HEK293 (cell line): ENCODE measurements at regions of chr12 and their contacts with region 1.

Region 1: GRCh38 chr12:121110211-121110940 is 22.3 kb upstream of the P2RX7 start:
- H3K4me3 ChIP-seq: no peak overlapping the region
- H3K27ac ChIP-seq: no peak overlapping the region
- H3K4me1 ChIP-seq: no peaks in the 10 kb centered on the region
- CTCF ChIP-seq: peak; percentile 81

Region 2: DNA sequence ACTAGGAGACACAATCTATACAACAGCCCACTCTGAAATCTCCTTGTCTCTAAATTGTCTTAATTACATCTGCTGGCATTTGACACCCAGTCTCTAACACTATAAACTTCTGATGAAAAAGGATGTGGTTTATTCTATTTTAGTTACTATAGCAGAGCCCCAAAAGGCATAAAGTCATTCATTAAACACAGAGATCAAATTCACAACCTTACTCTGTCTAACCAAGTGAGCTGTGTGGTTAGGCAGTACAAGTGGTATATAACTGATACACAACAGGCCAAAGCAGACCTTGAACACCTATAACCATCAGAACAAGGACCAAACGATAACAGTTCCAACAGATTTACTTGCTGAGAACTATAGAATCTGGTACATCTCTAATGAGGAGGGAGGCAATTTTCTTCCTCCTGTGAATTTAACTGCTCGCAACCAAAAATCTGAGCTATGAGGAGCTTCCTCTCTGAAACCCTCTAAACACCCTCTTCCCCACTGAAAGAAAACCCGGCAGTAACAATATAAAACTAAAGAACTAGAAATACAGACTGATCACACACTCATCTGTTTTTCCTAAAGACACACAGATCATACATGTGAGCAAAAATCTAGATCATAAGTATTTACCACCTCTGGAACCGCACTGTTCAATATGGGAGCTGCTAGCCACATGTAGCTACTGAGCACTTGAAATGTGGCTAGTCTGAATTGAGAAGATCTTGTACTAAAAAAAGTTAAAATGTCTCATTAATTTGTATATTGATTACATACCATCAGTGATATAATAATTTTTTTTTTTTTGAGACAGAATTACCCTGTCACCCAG is 224.0 kb before region 1 on chr12:
- CTCF ChIA-PET with region 1: no interaction called
- POLR2A ChIA-PET with region 1: no interaction called
- H3K4me3 ChIP-seq: no peak overlapping the region
- H3K27ac ChIP-seq: no peak overlapping the region
- H3K4me1 ChIP-seq: peaks cover 11% of the 10 kb centered on the region
- CTCF ChIP-seq: no peak

Region 3: GRCh38 chr12:121095544-121096198 is 14.7 kb before region 1 on chr12:
- CTCF ChIA-PET with region 1: interaction called, 24 read pairs
- POLR2A ChIA-PET with region 1: no interaction called
- H3K4me3 ChIP-seq: peak overlapping the region; percentile 33
- H3K27ac ChIP-seq: no peak overlapping the region
- H3K4me1 ChIP-seq: no peaks in the 10 kb centered on the region
- CTCF ChIP-seq: no peak; the same call in none of the 2 replicates